ENCODE measurements at regions of chr1 and their contacts with region 1.

Region 1: DNA sequence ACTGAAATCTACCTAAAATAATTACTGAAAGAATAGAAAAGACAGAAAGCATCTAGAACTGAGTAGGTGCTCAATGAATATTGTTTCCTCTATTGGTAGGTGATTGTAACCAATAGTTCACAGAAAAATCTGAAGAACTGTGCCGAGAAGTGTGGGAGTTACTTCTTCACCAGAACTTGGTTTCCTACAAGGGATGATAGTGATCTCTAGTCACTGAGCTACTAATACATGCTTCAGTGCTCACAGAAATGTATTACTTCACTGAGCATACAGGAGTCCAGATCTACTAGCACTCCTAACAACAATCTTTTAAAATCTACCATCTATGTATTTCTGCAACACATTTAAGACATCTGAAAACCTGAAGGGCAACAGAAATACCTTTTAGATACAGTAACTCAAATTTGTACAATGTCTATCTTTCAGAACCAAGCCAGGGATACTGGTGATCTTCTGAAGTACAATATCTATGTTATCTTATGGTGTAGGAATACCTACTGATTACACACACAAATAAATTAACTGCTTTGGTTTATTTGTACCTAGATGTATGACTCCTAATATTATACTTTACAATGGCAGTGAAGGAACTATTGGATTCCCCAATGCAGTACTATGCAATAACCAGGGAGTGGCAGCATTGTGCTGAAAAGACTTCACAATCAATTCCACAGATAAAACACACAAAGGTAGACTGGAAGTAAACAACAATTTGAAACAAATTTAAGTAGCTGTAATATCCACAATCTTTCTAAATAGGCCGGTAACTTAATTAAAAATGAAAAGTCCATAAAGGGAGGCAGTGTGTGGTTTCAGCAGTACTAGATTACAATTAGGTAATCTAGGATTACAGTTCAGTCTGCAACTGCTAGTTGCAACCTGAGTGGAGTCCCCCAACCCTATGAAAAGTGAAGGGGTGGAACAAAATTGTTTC is 243.0 kb downstream of the SLC45A1 start:
- DNase-seq: peak in 1 of 4 donors; percentile 43
- ATAC-seq: peak; percentile 92
- H3K4me3 ChIP-seq: no peak overlapping the region
- H3K27ac ChIP-seq: no peak overlapping the region
- H3K4me1 ChIP-seq: peaks cover 0 to 5% of the 10 kb centered on the region in 2 donors
- H3K27me3 ChIP-seq: no peaks in the 10 kb centered on the region
- CTCF ChIP-seq: peak; percentile 81 to 87

Region 2: GRCh38 chr1:8104278-8105236 is 456.3 kb before region 1 on chr1:
- intact Hi-C with region 1: no loop called
- DNase-seq: no peak
- ATAC-seq: peak; percentile 57
- H3K4me3 ChIP-seq: no peak overlapping the region
- H3K27ac ChIP-seq: peak overlapping the region in 1 of 2 donors; percentile 69
- H3K4me1 ChIP-seq: peaks cover 0 to 26% of the 10 kb centered on the region in 2 donors
- H3K27me3 ChIP-seq: no peaks in the 10 kb centered on the region
- CTCF ChIP-seq: no peak

Region 3: DNA sequence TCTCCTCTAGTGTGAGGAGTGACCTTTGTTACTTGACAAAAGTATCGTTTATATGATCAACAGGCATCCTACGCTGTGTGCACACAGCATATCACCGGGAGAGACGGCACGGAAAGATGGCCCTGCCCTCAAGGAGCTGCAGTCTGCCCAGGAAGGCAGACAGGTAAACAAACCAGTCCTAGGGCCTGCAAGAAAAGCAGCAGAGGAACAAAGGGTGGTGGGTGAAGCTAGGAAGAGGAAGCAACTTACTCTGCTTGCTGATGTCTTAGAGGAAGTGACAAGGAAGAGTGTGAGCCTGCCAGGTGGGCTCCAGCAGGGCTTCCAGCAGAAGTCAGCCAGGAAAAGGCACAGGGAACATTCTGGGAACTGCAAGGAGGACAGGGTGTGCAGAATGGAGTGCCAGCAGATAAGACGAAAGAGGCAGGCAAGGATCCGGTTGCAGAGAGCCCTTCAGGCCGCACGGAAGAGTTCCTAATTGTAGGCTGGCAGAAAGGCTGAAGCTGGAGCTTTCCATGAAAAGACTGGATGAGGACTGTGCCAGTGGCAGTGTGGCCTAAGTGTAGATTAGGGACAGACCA is 136.2 kb before region 1 on chr1:
- intact Hi-C with region 1: no loop called
- DNase-seq: peak in 2 of 4 donors; percentile 55 to 58
- ATAC-seq: peak; percentile 54
- H3K4me3 ChIP-seq: peak overlapping the region; percentile 58 to 71
- H3K27ac ChIP-seq: peak overlapping the region; percentile 96 to 98
- H3K4me1 ChIP-seq: peaks cover 33 to 86% of the 10 kb centered on the region in 2 donors
- H3K27me3 ChIP-seq: no peaks in the 10 kb centered on the region
- CTCF ChIP-seq: no peak

Region 4: DNA sequence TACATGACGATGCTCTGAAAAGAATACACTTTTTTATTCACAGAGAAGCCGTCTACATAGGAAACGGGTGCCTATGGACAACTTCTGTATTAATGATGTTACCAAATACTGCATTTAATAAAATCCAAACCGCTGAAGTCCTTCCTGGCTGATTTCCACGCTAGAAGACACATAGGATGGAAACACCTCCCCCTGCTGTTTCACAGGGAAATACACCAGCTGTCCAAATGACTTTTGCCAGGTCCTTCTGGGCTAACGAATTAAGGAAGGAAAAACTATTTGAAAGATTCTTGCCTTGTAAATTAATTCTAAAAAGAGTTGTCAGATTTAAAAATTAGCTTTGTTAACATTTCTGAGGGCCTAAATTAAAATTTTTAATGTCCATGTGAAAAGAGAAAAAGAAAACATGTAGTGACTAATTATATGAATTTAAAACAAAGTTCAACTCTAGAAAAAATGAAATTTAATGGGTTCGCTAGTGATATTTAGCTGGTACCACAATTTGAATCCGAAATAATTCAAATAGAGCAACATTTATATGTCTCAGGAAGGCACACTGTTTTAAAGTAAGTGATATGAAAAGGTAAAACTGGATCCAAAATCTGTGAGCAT is 110.5 kb after region 1 on chr1:
- intact Hi-C with region 1: loop called in 1 of 2 experiments (anchors 2 kb)
- DNase-seq: peak in 2 of 4 donors; percentile 68 to 82
- ATAC-seq: peak; percentile 77
- H3K4me3 ChIP-seq: no peak overlapping the region
- H3K27ac ChIP-seq: no peak overlapping the region
- H3K4me1 ChIP-seq: peaks cover 15 to 41% of the 10 kb centered on the region in 2 donors
- H3K27me3 ChIP-seq: no peaks in the 10 kb centered on the region
- CTCF ChIP-seq: peak; percentile 60 to 73

Region 5: GRCh38 chr1:8687039-8687438 is 126.2 kb after region 1 on chr1:
- intact Hi-C with region 1: no loop called
- DNase-seq: peak in 1 of 4 donors; percentile 61
- ATAC-seq: peak; percentile 41
- H3K4me3 ChIP-seq: no peak overlapping the region
- H3K27ac ChIP-seq: peak overlapping the region in 1 of 2 donors; percentile 46
- H3K4me1 ChIP-seq: peaks cover 8 to 16% of the 10 kb centered on the region in 2 donors
- H3K27me3 ChIP-seq: no peaks in the 10 kb centered on the region
- CTCF ChIP-seq: no peak

Region 6: DNA sequence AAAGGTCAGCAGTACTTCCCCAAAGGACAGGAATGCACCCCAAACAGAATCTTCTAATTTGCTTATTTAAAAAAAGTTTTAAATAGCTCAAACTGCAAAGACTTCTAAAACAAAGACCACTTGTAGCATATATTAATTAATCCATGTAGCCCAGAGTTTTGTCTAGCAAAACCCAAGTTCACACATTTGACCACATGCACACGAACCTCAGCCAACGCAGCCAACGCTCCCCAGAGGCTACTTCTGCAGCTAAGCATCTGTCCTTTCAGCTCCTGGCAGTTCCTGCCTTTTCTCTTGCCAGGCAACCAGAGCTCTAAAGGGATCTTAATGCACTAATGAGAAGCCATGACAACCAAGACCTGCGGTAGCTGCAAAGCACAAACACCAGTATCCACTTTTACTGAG is 166.9 kb after region 1 on chr1:
- intact Hi-C with region 1: loop called in 1 of 2 experiments (anchors 5 kb)
- DNase-seq: peak in 1 of 4 donors; percentile 54
- ATAC-seq: no peak
- H3K4me3 ChIP-seq: no peak overlapping the region
- H3K27ac ChIP-seq: no peak overlapping the region
- H3K4me1 ChIP-seq: peaks cover 2 to 10% of the 10 kb centered on the region in 2 donors
- H3K27me3 ChIP-seq: no peaks in the 10 kb centered on the region
- CTCF ChIP-seq: no peak

Region 7: DNA sequence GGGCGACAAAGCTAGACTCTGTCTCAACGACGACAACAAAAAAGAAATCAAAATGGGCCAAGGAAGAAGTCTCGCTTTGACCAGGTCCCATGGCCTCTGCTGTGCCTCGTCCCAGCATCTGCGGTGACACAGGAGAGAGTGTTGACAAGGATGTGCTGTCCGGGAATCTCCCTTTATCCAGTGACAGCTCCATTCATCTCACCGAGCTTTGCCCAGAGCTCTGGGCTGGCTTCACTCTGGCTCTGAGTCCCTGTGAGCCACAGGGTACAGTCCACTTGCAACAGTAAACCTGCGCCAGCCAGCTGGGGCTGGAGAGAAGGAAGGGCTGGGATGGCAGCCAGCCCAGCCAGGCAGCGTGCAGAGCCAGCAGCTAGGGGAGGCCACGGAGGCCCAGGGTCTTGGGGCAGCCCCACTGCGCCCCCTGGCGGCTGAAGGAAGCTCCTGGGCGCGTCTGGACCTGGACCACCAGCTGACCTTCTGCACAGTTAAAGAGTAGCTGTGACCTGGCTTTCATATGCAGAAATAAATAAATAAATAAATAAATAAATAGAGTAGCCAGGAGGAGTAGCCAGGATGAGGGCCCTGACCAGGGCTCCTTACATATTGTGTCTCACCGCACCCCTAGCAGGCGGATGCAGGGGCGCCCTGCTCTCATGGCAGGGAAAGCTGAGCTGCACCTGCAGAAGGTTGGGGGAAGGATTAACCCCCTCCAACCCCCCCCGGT is 287.9 kb after region 1 on chr1:
- intact Hi-C with region 1: loop called in 1 of 2 experiments (anchors 10 kb)
- DNase-seq: peak; percentile 87 to 97 (median 93)
- ATAC-seq: peak; percentile 99
- H3K4me3 ChIP-seq: no peak overlapping the region
- H3K27ac ChIP-seq: no peak overlapping the region
- H3K4me1 ChIP-seq: peaks cover 0 to 15% of the 10 kb centered on the region in 2 donors
- H3K27me3 ChIP-seq: no peaks in the 10 kb centered on the region
- CTCF ChIP-seq: peak; percentile 84 to 88

Measured in left lung (tissue), 14 donors.